PC-9 (cell line): ENCODE measurements at regions of chr3 and their contacts with region 1.

Region 1: GRCh38 chr3:126982471-126983175 is at the start of gene PLXNA1:
- DNase-seq: peak in 1 of 2 experiments; percentile 82
- H3K4me3 ChIP-seq: peak within 1 kb of the TSS; percentile 86
- H3K27ac ChIP-seq: no peak within 1 kb of the TSS
- H3K4me1 ChIP-seq: peaks cover 20% of the 10 kb centered on the region
- H3K27me3 ChIP-seq: no peaks in the 10 kb centered on the region
- CTCF ChIP-seq: peak; percentile 93
- total RNA-seq, gene PLXNA1: 83.1 and 88.2 TPM in 2 replicates

Region 2: GRCh38 chr3:126911162-126912026 is 71.2 kb before region 1 on chr3:
- CTCF ChIA-PET with region 1: no interaction called
- POLR2A ChIA-PET with region 1: interaction called, 3 read pairs
- intact Hi-C with region 1: loop called (anchors 1 kb)
- DNase-seq: peak; percentile 90 to 97
- H3K4me3 ChIP-seq: no peak overlapping the region
- H3K27ac ChIP-seq: peak overlapping the region; percentile 96
- H3K4me1 ChIP-seq: peaks cover 84% of the 10 kb centered on the region
- H3K27me3 ChIP-seq: no peaks in the 10 kb centered on the region
- CTCF ChIP-seq: no peak

Region 3: GRCh38 chr3:127064521-127065427 is 82.2 kb after region 1 on chr3:
- CTCF ChIA-PET with region 1: no interaction called
- POLR2A ChIA-PET with region 1: no interaction called
- intact Hi-C with region 1: no loop called
- DNase-seq: peak in 1 of 2 experiments; percentile 41
- H3K4me3 ChIP-seq: no peak overlapping the region
- H3K27ac ChIP-seq: no peak overlapping the region
- H3K4me1 ChIP-seq: 0 out of 2 replicates have a peak, but pooled peaks cover 5% of the 10 kb centered on the region
- H3K27me3 ChIP-seq: peaks cover 9% of the 10 kb centered on the region
- CTCF ChIP-seq: no peak

Region 4: DNA sequence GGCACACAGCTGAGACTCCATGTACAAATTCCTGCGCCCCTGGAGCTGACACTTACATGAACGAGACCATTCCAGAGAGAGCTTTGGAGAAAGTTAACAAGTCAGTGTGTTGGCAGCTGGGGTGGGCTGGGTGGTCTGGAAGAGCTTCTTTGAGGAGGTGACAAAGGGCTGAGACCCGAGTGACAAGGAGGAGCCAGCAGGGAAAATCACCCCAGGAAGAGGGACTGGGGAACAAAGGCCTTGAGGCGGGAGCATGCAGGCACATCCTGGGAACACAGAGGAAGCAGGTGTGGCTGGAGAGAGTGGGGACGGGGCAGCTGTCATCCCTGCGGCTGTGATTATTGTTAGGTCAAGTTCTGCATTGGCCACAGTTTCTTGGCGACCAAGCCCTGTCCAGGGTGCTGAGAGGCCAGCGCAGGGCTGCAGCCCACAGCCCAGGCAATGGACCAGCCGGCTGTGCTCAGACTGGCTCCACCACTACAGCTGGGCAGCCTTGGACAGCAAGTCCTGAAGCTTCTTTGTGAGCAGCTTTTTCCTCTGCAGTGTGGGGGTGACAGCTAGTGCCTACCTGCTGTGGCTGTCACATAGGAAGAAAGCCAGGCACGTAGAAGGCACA is 176.1 kb after region 1 on chr3:
- CTCF ChIA-PET with region 1: no interaction called
- POLR2A ChIA-PET with region 1: no interaction called
- intact Hi-C with region 1: no loop called
- DNase-seq: peak in 1 of 2 experiments; percentile 62
- H3K4me3 ChIP-seq: no peak overlapping the region
- H3K27ac ChIP-seq: no peak overlapping the region
- H3K4me1 ChIP-seq: no peaks in the 10 kb centered on the region
- H3K27me3 ChIP-seq: peaks cover 63% of the 10 kb centered on the region
- CTCF ChIP-seq: no peak

Region 5: GRCh38 chr3:127172781-127173515 is 190.3 kb after region 1 on chr3:
- CTCF ChIA-PET with region 1: interaction called, 5 read pairs
- POLR2A ChIA-PET with region 1: no interaction called
- intact Hi-C with region 1: loop called (anchors 10 kb)
- DNase-seq: peak in 1 of 2 experiments; percentile 31
- H3K4me3 ChIP-seq: no peak overlapping the region
- H3K27ac ChIP-seq: no peak overlapping the region
- H3K4me1 ChIP-seq: no peaks in the 10 kb centered on the region
- H3K27me3 ChIP-seq: peaks cover 48% of the 10 kb centered on the region
- CTCF ChIP-seq: no peak

Region 6: DNA sequence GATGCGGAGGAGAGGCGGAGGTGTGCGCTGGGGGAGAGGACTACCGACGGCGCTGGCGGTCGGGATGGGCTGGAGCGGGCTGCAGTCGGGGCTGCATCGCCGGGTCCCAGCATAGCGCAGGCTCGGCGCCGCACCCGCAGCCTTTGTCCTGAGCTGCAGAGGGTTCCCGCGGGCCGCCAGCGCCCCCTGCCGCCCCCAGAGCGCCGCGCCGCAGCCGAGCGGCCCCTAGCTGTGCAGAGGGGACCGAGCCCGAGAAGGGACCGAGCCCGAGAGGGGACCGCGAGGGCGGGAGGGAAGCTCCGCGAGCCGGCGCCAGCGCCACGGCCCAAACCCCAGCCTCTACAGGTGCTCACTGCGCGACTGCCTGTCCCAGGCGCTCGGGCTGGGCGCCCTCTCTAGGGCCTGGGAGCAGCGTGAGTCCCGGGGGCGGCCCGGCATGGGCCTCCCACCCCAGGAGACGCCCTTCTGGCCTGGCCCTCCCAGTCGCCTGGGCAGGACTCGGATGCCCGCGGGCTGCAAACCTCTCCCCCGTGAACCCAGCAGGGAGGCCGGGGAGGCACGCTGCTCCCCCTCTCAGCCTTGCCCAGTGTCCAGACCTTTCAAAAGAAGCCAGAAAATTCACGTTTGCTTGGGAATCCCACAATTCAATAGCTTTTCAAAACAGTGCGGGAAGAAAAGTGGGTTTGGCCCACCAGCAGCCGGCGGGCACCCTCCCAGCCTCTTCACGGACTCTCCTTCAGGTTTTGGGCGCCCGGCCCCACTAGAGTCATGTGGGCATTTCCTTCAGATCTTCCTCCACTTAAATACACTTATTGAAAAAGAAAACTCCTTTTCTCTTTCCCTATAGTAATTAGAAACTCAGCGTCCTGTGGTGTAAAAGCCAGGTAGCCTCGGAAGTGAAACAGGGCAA is 473.2 kb after region 1 on chr3:
- CTCF ChIA-PET with region 1: no interaction called
- POLR2A ChIA-PET with region 1: no interaction called
- intact Hi-C with region 1: loop called (anchors 2 kb)
- DNase-seq: peak in 1 of 2 experiments; percentile 90
- H3K4me3 ChIP-seq: peak overlapping the region; percentile 39; the same call in 1 of the 2 replicates
- H3K27ac ChIP-seq: no peak overlapping the region
- H3K4me1 ChIP-seq: peaks cover 11% of the 10 kb centered on the region
- H3K27me3 ChIP-seq: peaks cover 60% of the 10 kb centered on the region
- CTCF ChIP-seq: peak; percentile 82